ENCODE measurements at regions of chr16 and their contacts with region 1.

Region 1: GRCh38 chr16:30370444-30371247 is at the start of gene TBC1D10B:
- DNase-seq: peak; percentile 100
- H3K4me3 Mint-ChIP-seq: peak within 1 kb of the TSS; percentile 91
- H3K27ac Mint-ChIP-seq: peak within 1 kb of the TSS; percentile 95
- H3K4me1 Mint-ChIP-seq: peaks cover 34% of the 10 kb centered on the region
- H3K27me3 Mint-ChIP-seq: peaks cover 3% of the 10 kb centered on the region
- total RNA-seq, gene TBC1D10B: 54.7 to 54.8 TPM

Region 2: DNA sequence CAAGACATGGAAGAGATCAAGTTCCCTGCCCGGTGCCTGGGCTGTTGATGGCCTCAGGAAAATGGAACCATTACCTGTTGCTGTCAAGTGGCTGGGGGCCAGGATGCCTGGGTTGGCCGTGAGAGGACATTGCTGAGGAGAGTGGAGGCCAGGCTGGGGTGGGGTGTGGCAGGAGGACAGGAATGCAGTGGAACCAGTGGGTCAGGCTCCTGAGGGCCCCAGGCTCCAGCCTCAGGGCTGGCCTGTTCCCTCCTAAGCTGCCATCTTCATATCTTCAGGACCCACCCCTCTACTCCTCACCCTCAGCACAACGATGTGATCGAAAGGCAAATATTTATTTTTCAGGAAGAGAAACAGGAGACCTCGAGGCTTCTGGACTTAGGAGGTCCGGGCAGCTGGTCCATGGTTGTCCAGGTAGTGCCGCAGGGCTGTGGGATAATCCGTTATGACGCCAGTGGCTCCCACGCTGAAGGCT is 266.1 kb before region 1 on chr16:
- CTCF ChIA-PET with region 1: no interaction called
- POLR2A ChIA-PET with region 1: no interaction called
- intact Hi-C with region 1: no loop called
- DNase-seq: no peak
- H3K4me3 Mint-ChIP-seq: no peak overlapping the region
- H3K27ac Mint-ChIP-seq: no peak overlapping the region
- H3K4me1 Mint-ChIP-seq: no peaks in the 10 kb centered on the region
- H3K27me3 Mint-ChIP-seq: no peaks in the 10 kb centered on the region

Region 3: GRCh38 chr16:30335598-30336474 is 34.8 kb before region 1 on chr16:
- CTCF ChIA-PET with region 1: no interaction called
- POLR2A ChIA-PET with region 1: interaction called, 4 read pairs
- intact Hi-C with region 1: loop called (anchors 1 kb)
- DNase-seq: peak; percentile 61
- H3K4me3 Mint-ChIP-seq: peak overlapping the region; percentile 94
- H3K27ac Mint-ChIP-seq: peak overlapping the region; percentile 84
- H3K4me1 Mint-ChIP-seq: peaks cover 12% of the 10 kb centered on the region
- H3K27me3 Mint-ChIP-seq: no peaks in the 10 kb centered on the region

Region 4: DNA sequence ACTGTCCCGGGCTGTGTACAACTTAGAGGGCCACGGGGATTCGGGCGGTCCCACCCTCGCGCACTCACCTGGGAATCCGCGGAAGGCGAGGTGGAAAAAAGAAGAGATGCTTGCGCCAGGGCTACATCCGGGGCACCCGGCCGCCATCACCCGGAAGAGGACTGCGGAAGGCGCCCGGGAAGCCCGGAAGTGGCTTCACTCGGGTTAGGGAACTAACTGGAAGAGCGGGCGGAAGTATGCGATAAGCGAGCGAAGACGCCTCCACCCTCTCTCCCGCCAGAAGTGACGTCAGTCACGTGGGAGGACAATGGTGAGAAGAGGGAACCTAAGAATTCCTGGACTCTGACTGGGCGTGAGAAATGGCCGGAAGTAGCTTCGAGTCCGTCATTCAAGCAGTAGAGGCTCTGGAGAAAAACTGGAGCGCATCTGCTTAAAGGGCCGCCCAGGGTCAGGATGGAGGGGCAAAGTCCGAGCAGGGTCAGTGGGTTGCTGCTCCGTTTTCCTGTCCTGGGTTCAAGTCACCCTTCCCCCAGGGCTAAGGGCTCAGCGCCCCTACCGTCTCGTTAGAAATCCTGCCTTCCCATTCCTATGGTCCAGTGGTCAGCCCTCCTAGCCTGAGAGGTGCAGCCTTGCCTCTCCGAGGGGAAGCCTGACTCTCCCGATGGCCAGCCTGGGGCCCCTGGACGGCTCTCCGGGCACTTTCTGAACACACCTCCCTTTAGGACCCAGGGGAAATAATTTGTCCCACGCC is 15.3 kb before region 1 on chr16 and contains the start of gene CD2BP2:
- CTCF ChIA-PET with region 1: interaction called, 10 read pairs
- POLR2A ChIA-PET with region 1: interaction called, 5 read pairs
- intact Hi-C with region 1: loop called (anchors 1 kb)
- DNase-seq: peak; percentile 94
- H3K4me3 Mint-ChIP-seq: peak within 1 kb of the TSS; percentile 94
- H3K27ac Mint-ChIP-seq: peak within 1 kb of the TSS; percentile 95
- H3K4me1 Mint-ChIP-seq: peaks cover 45% of the 10 kb centered on the region
- H3K27me3 Mint-ChIP-seq: no peaks in the 10 kb centered on the region
- total RNA-seq, gene CD2BP2: 60.7 to 61.4 TPM